Common myeloid progenitor, CD34-positive (primary cell): ENCODE measurements at regions of chr13 and their contacts with region 1.

Region 1: DNA sequence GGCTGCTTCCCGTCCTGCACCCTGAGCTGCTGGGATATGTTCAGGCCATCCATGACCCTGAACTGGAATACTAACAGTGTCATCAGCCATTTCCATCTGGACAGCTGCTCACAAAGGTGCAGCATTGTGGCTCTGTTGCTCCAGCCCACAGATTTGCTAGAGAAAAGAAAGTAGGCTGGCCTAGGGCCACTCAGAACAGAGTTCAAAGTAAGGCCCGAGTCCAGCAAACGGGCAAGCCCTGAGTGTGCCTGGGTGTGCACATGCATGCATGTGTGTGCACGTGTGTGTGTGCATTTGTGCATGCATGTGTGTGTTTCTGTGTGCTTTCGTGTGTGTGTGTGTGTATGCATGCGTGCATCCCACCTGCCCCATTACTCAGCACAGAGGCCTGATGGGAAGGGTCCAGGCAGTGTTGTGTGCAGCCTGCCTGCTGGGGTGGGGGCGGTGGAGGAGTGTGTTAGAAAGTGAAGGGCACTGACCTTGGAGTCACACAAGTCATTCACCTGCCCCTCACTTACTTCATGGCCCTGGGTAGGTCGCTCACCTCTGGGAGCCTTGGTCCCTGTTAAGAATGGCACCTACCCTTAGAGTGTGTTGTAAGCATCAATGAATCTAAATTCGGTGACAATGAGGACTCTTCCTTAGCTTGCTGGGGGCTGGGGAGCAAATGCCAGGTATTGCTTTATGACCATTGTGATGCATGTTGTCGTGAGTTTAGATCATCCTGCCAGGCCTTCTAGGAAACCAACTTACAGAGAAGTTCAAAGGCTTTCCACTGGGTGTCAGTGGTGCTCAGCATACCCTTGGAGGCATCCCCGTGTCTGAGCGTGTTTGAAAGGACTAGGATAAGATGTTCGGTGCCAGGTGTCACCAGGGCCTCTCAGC is 53.2 kb downstream of the GPR12 start:
- DNase-seq: peak; percentile 70 to 88 (median 80)
- H3K4me3 ChIP-seq: no peak overlapping the region
- H3K27ac ChIP-seq: no peak overlapping the region
- H3K4me1 ChIP-seq: no peaks in the 10 kb centered on the region
- H3K27me3 ChIP-seq: no peaks in the 10 kb centered on the region

Region 2: DNA sequence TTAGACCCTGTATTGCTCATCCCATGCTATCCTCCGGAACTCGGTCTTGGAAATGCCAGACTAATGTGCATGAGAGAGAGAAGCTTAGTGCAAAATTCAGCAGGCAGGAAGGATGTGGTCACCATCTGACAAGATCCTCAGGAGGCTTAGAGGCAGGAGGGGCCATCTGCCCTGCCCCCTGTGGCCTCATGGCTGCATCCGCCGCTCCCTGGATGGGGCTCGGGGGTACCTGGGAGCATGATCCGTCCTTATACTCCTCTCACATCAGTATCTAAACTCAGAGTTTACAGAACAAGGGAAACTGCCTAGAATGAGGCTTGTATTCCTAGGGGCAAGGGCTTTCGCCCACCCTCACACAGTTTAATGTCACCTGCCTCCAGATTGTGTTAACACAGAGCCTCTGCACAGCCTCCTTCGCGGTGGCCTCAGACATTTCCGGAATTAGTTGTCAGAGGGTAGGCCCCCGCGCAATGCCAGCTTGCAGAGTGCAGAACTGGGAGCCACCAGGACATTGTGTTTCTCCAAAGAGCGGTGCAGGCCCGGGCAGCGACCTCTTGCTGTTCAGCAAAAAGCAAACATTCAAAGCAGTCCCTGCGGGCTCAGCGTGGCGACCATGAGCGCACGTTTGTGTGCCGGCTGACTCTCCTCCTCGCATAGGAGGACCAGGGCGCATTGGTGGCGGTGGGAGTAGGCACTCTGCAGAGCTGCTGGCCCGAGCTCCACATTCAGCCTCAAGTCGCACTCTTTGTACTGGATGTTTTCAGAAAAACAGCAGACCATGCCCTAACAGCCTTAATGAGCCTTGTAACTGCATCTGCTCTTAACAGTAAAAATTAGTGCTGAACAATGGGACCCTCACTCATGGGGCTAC is 14.1 kb after region 1 on chr13:
- CTCF ChIA-PET with region 1: interaction called, 94 read pairs
- POLR2A ChIA-PET with region 1: no interaction called
- DNase-seq: peak; percentile 81 to 94 (median 94)
- H3K4me3 ChIP-seq: peak overlapping the region in 5 of 7 experiments; percentile 20 to 69 (median 56)
- H3K27ac ChIP-seq: peak overlapping the region; percentile 85 to 96
- H3K4me1 ChIP-seq: peaks cover 24 to 53% (median 44%) of the 10 kb centered on the region in 4 experiments
- H3K27me3 ChIP-seq: no peaks in the 10 kb centered on the region

Region 3: DNA sequence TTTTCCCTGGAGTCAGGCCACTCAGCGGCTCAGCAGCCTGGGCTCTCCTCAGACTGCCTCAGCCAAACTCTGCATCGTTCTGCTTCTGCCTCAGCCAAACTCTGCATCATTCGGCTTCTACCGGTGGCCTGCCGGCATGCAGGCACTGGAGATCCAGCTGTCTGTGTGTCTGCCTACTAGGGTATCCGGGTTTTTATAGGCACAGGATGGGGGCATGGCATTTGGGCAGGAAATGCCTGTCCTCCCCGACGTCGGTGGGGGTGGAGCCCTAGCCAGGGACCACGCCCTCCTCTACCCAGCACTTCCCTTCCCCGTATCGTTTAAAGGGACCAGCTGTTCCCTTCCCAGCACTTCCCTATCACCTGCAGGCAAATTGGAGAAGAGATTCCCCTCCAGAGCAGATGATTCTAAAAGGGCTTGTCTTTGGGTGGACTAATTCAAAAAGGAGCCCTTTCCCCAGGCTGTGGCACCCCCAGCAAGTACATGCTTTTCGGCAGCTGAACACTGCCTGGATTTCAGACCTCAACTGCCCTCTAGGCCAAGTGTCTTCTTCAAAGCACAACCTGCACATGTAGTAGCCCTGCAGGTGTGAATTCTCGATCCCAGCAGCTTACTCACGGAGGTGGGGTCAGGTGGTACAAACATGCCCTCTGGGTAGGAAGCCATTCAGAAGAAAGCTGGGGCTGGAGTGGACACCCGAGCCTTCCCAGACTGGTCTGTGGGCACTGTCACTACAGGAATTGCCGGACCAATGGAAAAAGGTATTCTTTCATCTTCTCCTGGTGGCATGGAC is 78.7 kb after region 1 on chr13:
- CTCF ChIA-PET with region 1: interaction called, 12 read pairs
- POLR2A ChIA-PET with region 1: no interaction called
- DNase-seq: peak; percentile 72 to 84 (median 82)
- H3K4me3 ChIP-seq: peak overlapping the region in 6 of 7 experiments; percentile 23 to 80 (median 61)
- H3K27ac ChIP-seq: no peak overlapping the region
- H3K4me1 ChIP-seq: peaks cover 0 to 24% (median 22%) of the 10 kb centered on the region in 4 experiments
- H3K27me3 ChIP-seq: no peaks in the 10 kb centered on the region

Region 4: DNA sequence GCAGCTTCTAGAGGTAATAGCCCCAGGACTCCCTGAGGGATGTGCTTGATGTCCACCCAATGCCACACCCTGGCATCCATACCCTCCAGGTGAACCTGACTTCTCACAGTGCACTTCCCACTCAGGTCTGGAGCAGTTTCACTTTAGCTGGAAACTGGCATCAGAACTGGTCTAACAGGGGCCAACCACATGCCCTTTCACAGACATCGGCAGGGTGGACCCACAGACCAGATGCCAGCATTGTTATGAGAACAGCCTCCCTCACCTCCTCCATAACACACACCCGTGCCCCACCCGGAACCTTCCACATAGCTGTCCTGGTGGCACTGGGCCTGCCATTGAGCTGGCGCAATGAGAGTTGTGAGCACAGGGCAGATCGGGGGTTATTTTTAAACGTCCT is 130.6 kb after region 1 on chr13:
- CTCF ChIA-PET with region 1: no interaction called
- POLR2A ChIA-PET with region 1: no interaction called
- DNase-seq: no peak
- H3K4me3 ChIP-seq: no peak overlapping the region
- H3K27ac ChIP-seq: no peak overlapping the region
- H3K4me1 ChIP-seq: no peaks in the 10 kb centered on the region
- H3K27me3 ChIP-seq: peaks cover 0 to 15% (median 5%) of the 10 kb centered on the region in 5 experiments

Region 5: GRCh38 chr13:26872525-26873385 is 165.4 kb after region 1 on chr13:
- CTCF ChIA-PET with region 1: interaction called, 89 read pairs
- POLR2A ChIA-PET with region 1: no interaction called
- DNase-seq: peak; percentile 52 to 81 (median 67)
- H3K4me3 ChIP-seq: no peak overlapping the region
- H3K27ac ChIP-seq: no peak overlapping the region
- H3K4me1 ChIP-seq: no peaks in the 10 kb centered on the region
- H3K27me3 ChIP-seq: peaks cover 0 to 18% (median 4%) of the 10 kb centered on the region in 5 experiments

Region 6: GRCh38 chr13:26929971-26930730 is 222.8 kb after region 1 on chr13:
- CTCF ChIA-PET with region 1: interaction called, 32 read pairs
- POLR2A ChIA-PET with region 1: no interaction called
- DNase-seq: peak; percentile 67 to 75 (median 72)
- H3K4me3 ChIP-seq: no peak overlapping the region
- H3K27ac ChIP-seq: no peak overlapping the region
- H3K4me1 ChIP-seq: peaks cover 0 to 5% (median 2%) of the 10 kb centered on the region in 4 experiments
- H3K27me3 ChIP-seq: peaks cover 0 to 4% (median 0%) of the 10 kb centered on the region in 5 experiments